Right ventricle myocardium inferior (tissue), 1 donor: ENCODE measurements at regions of chr20 and their contacts with region 1.

Region 1: DNA sequence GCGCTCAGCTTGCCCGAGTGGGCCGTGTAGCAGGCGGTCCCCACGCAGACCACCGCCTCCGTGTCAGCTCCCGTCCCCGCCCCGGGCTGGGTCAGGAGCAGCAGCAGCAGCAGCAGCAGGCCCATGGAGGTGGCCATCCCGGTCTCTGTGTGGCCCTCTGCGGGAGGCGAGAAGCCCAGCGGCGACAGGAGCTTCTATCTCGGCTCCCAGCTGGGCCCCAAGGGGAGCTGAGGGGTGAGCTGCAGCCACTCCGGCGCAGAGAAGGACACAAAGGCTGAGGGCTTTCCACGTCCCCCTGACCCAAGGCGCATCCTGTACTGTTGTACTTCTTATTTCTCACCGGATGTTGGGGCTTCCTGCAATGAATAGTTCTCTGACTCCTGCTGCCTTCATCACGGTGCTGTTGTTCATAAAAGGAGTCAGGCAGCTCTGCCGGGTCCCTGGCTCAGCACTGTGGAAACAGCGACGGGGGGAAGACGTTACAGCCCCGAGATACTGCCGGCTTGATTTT is at the start of gene CD93:
- DNase-seq: peak; percentile 79
- ATAC-seq: peak; percentile 62
- total RNA-seq, gene CD93: 43.5 TPM

Region 2: GRCh38 chr20:23106261-23106851 is 20.2 kb after region 1 on chr20:
- intact Hi-C with region 1: no loop called
- DNase-seq: no peak
- ATAC-seq: peak; percentile 56

Region 3: GRCh38 chr20:23132930-23133559 is 46.9 kb after region 1 on chr20:
- intact Hi-C with region 1: loop called (anchors 2 kb)
- DNase-seq: no peak
- ATAC-seq: peak; percentile 73

Region 4: GRCh38 chr20:23161968-23162696 is 76.0 kb after region 1 on chr20:
- intact Hi-C with region 1: loop called (anchors 5 kb)
- DNase-seq: peak; percentile 93
- ATAC-seq: peak; percentile 86

Region 5: DNA sequence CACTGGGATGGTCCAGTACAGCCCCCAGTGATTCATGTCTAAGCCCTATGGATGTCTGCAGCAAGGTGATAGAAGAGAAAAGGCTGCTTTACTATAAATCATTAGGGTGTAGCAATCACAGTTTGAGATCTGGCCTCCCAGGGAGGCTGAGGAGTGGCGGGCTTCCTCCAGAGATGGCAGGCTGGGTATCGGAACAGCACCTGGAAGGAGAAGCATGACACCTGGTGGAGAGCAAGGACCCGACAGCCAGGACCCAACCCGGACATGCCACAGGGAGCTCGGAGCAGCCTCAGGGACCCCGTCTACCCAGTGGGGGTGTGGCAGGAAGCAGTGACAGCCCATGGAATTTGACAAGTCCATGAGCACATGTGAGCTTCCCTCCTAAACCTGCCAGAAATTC is 114.8 kb after region 1 on chr20:
- intact Hi-C with region 1: loop called (anchors 10 kb)
- DNase-seq: no peak
- ATAC-seq: peak; percentile 20